ENCODE measurements at regions of chr14 and their contacts with region 1.

Region 1: DNA sequence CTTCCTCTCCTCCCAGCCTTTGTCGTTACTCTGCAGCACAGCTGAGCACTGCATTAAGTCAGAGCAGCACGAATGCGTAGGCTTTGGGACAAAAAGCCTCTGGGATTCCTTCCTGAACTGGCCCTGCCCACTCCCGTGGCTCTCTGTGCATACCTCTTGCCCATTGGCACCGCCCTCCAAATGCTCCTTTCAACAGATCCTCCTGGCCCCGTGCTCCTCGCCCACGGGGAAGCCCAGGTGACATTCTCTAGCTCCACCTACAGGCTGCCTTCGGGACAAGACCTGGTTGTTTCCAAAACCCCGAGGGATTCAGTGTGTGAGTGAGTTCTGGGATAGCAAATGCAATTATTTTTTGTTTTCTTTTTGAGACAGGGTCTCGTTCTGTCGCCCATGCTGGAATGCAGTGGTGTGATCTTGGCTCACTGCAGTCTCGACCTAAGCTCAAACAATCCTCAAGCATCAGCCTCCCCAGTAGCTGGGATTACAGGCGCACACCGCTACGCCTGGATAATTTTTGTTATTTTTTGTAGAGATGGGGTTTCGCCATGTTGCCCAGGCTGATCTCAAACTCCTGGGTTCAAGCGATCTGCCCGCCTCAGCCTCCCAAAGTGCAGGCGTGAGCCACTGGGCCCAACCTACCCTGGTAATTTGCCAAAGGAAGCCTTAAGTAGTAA is 17.9 kb upstream of the TDRD9 start:
- DNase-seq: peak; percentile 78 to 89 (median 86)
- ATAC-seq: peak; percentile 91 to 95
- H3K4me3 ChIP-seq: no peak overlapping the region
- H3K27ac ChIP-seq: peak overlapping the region; percentile 5
- H3K4me1 ChIP-seq: no peaks in the 10 kb centered on the region
- H3K27me3 ChIP-seq: no peaks in the 10 kb centered on the region

Region 2: GRCh38 chr14:103808403-103809001 is 101.9 kb before region 1 on chr14:
- intact Hi-C with region 1: loop called in 3 of 4 experiments (anchors 2 to 10 kb)
- DNase-seq: peak; percentile 70 to 89 (median 85)
- ATAC-seq: peak; percentile 78 to 82
- H3K4me3 ChIP-seq: no peak overlapping the region
- H3K27ac ChIP-seq: no peak overlapping the region
- H3K4me1 ChIP-seq: peaks cover 4% of the 10 kb centered on the region
- H3K27me3 ChIP-seq: no peaks in the 10 kb centered on the region

Region 3: DNA sequence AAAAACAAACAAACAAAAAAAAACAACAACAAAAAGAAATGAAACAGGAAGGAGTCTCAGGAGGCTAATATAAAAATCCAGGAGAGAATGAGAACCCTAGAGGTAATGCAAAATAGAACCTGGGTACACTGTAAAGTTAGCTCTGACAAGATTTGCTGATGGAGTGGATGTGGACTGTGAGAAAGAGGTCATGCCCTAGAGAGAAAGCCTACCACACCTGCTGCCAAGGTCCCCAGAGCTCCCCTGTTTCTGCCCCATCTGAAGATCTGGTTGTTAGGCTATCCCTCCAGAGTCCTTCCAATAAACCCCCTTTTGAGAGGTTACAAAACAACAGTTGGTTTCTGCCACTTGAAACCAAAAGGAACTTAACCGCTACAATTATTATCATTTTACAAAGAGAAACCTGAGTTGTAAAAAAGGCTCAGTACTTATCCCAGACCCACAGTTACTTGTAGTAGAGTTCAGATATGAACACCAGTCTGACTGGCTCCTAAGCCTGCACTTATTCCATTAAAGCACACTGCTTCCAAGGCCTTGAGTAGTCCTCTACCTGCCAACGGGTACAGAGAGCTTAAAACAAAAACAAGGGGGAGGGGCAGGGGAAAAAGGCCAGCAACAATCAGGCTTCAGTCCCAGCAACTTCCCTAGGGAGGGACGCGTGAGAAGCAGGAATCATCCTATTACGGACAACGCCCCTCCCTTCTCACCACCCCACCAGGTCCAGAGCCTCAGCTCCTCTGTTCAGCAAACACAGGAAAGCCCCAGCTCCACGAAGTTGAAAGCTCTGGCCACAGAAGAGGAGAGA is 90.7 kb before region 1 on chr14:
- intact Hi-C with region 1: loop called in 1 of 4 experiments (anchors 10 kb)
- DNase-seq: peak; percentile 52 to 75 (median 73)
- ATAC-seq: peak; percentile 76 to 89
- H3K4me3 ChIP-seq: peak overlapping the region; percentile 15
- H3K27ac ChIP-seq: peak overlapping the region; percentile 91
- H3K4me1 ChIP-seq: peaks cover 6% of the 10 kb centered on the region
- H3K27me3 ChIP-seq: no peaks in the 10 kb centered on the region

Measured in right cardiac atrium (tissue), 5 donors.